CD14-positive monocyte (primary cell): ENCODE measurements at regions of chr7 and their contacts with region 1.

Region 1: GRCh38 chr7:139133335-139134139 is 24.0 kb upstream of the ZC3HAV1 start:
- DNase-seq: peak; percentile 80 to 85 (median 82)
- H3K4me3 ChIP-seq: peak overlapping the region; percentile 72 to 82 (median 79)
- H3K4me3 Mint-ChIP-seq: peak overlapping the region; percentile 83 to 96
- H3K27ac ChIP-seq: peak overlapping the region in 1 of 2 donors; percentile 86
- H3K27ac Mint-ChIP-seq: peak overlapping the region; percentile 85 to 94 (median 87)
- H3K4me1 ChIP-seq: peaks cover 29 to 37% of the 10 kb centered on the region in 2 donors
- H3K4me1 Mint-ChIP-seq: peaks cover 51% of the 10 kb centered on the region
- H3K27me3 ChIP-seq: no peaks in the 10 kb centered on the region
- H3K27me3 Mint-ChIP-seq: no peaks in the 10 kb centered on the region
- CTCF ChIP-seq: no peak

Region 2: GRCh38 chr7:139095194-139095659 is 38.3 kb before region 1 on chr7:
- intact Hi-C with region 1: loop called in 1 of 2 experiments (anchors 5 kb)
- DNase-seq: peak; percentile 27 to 50 (median 48)
- H3K4me3 ChIP-seq: peak overlapping the region in 1 of 3 experiments; percentile 18
- H3K4me3 Mint-ChIP-seq: peak overlapping the region; percentile 34 to 59
- H3K27ac ChIP-seq: peak overlapping the region; percentile 54 to 59
- H3K27ac Mint-ChIP-seq: peak overlapping the region; percentile 66 to 90 (median 74)
- H3K4me1 ChIP-seq: peaks cover 14 to 20% of the 10 kb centered on the region in 2 donors
- H3K4me1 Mint-ChIP-seq: peaks cover 42% of the 10 kb centered on the region
- H3K27me3 ChIP-seq: no peaks in the 10 kb centered on the region
- H3K27me3 Mint-ChIP-seq: peaks cover 0 to 3% (median 0%) of the 10 kb centered on the region in 3 donors
- CTCF ChIP-seq: no peak

Region 3: DNA sequence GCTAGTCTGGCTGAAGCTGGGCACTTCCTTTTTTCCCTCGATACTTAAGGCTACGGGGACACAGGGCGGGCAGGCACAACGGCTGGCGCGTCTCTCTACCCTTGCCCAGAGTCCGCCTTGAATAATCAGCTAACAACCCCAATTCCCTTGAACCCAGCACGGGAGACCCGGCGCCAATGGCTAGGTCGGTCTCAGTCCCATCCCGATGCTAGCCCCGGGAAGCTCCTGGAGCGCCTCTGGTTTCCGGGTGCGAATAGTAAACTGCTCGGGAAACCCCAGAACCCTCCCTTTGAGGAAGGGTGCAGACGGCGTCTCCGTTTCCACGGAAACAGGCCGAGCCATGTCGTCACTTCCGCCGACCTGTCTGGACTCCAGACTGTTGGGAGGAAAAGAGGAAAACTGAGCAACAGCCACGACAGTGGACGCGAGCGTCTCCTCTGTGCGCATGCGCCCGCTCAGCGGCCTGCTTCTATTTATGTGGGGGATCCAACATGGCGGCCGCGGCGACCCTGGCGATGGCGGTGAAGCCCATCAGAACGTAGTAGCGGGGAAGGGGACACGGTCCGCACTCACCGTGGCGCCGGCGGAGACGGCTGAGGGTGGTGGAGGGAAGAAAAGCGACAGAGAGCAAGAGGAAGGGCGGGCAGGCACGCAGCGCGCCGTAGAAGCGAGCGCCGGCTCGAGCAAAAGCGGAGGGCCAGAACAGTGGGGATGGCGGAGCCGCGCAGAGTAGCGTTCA is 97.4 kb after region 1 on chr7 and contains the start of gene UBN2:
- intact Hi-C with region 1: loop called (anchors 5 to 10 kb)
- DNase-seq: peak; percentile 97 to 100 (median 99)
- H3K4me3 ChIP-seq: peak within 1 kb of the TSS; percentile 89 to 100 (median 93)
- H3K4me3 Mint-ChIP-seq: peak within 1 kb of the TSS; percentile 100
- H3K27ac ChIP-seq: peak within 1 kb of the TSS; percentile 86 to 87
- H3K27ac Mint-ChIP-seq: peak within 1 kb of the TSS; percentile 94 to 99 (median 97)
- H3K4me1 ChIP-seq: peaks cover 14 to 23% of the 10 kb centered on the region in 2 donors
- H3K4me1 Mint-ChIP-seq: peaks cover 25% of the 10 kb centered on the region
- H3K27me3 ChIP-seq: no peaks in the 10 kb centered on the region
- H3K27me3 Mint-ChIP-seq: peaks cover 0 to 8% (median 0%) of the 10 kb centered on the region in 3 donors
- CTCF ChIP-seq: no peak
- polyA plus RNA-seq, gene UBN2: 0.80 to 4.2 (median 1.6) TPM